RWPE1 (cell line): ENCODE measurements at regions of chr16 and their contacts with region 1.

Region 1: DNA sequence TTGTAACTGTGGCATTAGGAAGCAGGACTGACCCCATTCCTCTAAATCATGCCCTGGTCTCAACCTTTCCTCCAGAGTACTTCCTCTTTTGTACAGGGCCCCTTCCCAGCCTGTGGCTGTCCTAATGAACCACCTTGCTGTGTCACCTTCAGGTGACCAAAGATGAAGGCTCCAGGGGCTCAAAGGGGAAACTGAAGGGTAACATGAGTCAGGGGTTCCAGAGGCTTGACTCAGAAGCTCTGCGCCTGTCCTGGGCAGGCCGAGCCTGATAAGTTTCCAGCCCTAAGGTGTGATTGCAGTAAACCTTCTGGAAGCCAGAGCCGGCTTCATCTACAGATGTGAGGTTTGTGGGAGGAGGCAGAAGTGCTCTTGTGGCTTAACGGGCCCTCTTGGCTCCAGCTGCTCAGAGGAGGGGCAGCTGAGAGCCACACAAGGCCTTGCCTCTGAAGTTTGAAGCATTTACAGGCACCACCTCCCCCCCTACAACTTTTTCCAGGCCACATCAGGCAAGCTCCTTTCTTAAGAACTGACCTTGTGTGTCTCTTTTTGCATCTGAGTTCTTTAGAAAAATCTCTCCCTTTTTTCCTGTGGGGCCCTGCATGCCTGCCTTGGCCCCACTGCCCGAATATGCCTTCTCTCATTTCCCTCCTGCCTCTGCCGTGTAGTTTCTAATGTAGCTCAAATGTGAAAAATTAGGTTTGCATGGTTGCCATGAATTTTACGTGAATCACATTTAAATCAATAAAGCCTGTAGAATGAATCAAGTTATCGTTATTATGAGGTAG is 149.9 kb downstream of the CLEC16A start:
- DNase-seq: peak; percentile 44
- H3K27ac ChIP-seq: peak overlapping the region; percentile 68
- CTCF ChIP-seq: no peak

Region 2: GRCh38 chr16:11239644-11240632 is 145.7 kb after region 1 on chr16:
- CTCF ChIA-PET with region 1: interaction called, 11 read pairs
- POLR2A ChIA-PET with region 1: no interaction called
- DNase-seq: no peak
- H3K27ac ChIP-seq: no peak overlapping the region
- CTCF ChIP-seq: no peak